ENCODE measurements at regions of chr12 and their contacts with region 1.

Region 1: DNA sequence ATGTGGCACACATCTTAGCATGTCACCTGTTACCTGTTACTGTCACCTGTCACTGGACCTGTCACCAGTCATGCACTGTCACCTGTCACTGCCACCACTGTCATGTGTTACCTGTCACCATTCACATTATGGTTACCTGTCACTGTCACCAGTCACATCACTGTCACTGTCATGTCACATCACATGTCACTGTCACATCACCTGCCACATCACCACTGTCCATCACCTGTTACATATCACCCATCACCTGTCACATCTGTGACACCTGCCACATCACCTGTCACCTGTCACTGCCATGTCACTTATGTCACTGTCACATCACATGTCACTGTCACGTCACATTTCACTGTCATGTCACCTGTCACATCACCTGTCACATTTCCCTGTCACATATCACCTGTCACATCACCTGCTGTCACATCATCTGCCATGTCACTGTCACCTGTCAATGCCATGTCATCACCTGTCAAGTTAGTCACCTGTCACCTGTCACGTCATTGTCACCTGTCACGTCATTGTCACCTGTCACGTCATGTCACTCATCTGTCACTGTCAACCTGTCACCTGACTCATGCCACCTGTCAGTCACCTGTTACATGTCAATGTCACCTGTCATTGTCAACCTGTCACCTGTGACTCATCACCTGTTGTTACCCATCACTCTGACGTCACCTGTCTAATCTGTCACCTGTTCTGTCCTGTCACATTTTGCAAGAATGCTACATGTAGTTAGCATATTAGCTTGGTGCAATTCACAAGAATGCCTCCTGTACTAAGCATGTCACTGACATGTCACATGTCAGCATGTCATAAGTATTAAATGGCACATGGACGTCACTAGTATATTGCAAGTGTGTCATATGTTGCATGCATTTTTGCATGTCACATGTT is 29.0 kb upstream of the TESC start:
- H3K4me3 ChIP-seq: no peak overlapping the region
- H3K27ac ChIP-seq: no peak overlapping the region
- H3K4me1 ChIP-seq: no peaks in the 10 kb centered on the region
- CTCF ChIP-seq: no peak

Region 2: DNA sequence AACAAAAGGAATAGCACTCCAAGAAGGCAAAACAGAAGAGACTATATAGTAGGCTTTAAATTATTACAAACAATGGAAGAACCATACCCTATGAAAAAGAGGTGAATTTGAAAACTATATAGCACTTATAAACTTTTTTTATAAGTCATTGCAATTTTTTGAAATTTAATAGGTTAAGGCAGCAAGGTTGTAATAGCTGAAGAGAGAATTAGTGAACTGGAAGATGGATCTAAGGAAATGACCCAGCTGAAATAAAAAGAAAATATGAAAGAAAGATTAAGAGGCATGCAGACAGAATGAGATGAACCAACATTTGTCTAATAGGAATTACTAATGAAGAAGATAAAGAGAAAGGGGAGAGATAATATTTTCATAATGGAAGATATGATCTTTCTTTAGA is 38.7 kb before region 1 on chr12:
- CTCF ChIA-PET with region 1: no interaction called
- POLR2A ChIA-PET with region 1: no interaction called
- H3K4me3 ChIP-seq: no peak overlapping the region
- H3K27ac ChIP-seq: no peak overlapping the region
- H3K4me1 ChIP-seq: no peaks in the 10 kb centered on the region
- CTCF ChIP-seq: no peak

Region 3: GRCh38 chr12:117151195-117152031 is 23.2 kb after region 1 on chr12:
- CTCF ChIA-PET with region 1: interaction called, 10 read pairs
- POLR2A ChIA-PET with region 1: no interaction called
- H3K4me3 ChIP-seq: no peak overlapping the region
- H3K27ac ChIP-seq: no peak overlapping the region
- H3K4me1 ChIP-seq: no peaks in the 10 kb centered on the region
- CTCF ChIP-seq: 0 out of 2 replicates have a peak, but pooled peaks have one; percentile 21